GM10248 (cell line): ENCODE measurements at regions of chr11 and their contacts with region 1.

Region 1: GRCh38 chr11:65204646-65205601 is 23.2 kb downstream of the CAPN1 start:
- DNase-seq: peak; percentile 82
- CTCF ChIP-seq: peak; percentile 87

Region 2: DNA sequence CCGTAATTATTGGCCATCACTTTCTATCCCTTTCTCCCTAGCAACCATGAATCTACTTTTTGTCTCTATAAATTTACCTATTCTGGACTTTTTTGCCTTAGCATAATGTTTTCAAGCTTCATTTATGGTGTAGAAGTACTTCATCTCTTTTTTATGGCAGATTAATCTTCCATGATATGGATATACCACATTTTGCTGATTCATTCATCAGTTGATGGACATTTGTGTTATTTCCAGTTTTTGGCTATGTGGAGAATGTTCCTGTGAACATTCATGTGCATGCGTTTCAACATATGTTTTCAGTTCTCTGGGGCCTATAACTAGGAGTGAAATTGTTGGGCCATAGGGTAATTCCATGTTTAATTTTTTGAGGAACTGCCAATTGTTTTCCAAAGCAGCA is 10.4 kb before region 1 on chr11:
- CTCF ChIA-PET with region 1: interaction called, 10 read pairs
- POLR2A ChIA-PET with region 1: no interaction called
- DNase-seq: no peak
- CTCF ChIP-seq: no peak

Region 3: DNA sequence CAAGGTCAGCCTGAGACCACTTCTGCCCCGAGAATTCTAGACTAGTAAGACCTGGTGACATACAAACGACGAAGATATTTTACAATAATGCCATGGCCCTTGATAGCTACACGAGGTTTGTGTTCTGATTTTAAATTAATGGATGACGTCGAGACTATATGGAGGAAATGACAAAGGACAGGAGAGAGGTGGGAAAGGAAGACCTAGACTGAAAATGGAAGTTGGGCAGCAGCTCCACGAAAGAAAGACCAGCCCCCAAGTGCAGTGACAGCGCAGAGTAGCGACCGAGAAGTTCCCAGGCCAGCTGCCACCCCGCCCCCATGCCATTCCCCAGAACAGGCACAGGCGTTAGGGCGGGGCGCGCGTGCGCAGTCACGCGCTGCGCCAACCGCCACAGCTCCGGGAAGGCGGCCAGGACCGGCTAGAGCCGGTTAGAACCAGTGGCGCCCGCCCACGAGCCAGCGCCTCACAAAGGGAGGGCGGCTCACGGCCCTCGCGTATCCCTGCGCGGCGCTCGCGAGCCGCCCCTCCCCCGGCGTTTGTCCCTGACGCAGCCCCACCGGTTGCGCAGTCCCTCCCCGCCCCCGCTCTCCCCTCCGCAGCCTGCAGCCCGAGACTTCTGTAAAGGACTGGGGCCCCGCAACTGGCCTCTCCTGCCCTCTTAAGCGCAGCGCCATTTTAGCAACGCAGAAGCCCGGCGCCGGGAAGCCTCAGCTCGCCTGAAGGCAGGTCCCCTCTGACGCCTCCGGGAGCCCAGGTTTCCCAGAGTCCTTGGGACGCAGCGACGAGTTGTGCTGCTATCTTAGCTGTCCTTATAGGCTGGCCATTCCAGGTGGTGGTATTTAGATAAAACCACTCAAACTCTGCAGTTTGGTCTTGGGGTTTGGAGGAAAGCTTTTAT is 292.5 kb after region 1 on chr11:
- CTCF ChIA-PET with region 1: no interaction called
- POLR2A ChIA-PET with region 1: no interaction called
- DNase-seq: peak; percentile 87
- CTCF ChIP-seq: no peak

Region 4: DNA sequence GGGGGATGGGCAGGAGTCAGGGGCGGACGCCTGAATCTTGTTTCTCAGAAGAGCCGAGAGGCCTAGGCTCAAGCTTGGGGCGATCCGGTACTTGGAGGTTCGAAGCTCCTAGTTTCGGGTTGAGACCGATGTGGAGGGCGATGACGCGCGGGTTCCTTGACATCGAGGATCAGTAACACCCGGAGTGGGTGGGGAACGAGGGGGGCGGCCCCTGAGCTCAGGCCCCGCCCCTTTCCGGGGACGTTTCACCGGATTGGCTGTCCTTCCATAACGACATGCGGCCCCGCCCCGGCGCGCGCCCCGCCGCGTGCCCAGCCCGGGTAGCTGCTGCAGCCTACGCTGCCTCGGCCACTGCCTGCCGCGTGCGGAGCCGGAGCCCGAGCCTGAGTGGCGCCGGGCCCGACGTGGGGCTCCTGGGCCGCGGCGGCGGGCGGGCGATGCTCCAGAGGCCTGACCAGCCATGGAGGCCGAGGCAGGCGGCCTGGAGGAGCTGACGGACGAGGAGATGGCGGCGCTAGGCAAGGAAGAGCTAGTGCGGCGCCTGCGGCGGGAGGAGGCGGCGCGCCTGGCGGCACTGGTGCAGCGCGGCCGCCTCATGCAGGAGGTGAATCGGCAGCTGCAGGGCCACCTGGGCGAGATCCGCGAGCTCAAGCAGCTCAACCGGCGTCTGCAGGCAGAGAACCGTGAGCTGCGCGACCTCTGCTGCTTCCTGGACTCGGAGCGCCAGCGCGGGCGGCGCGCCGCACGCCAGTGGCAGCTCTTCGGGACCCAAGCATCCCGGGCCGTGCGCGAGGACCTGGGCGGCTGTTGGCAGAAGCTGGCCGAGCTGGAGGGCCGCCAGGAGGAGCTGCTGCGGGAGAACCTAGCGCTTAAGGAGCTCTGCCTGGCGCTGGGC is 685.6 kb after region 1 on chr11 and contains the start of gene CCDC85B:
- CTCF ChIA-PET with region 1: no interaction called
- POLR2A ChIA-PET with region 1: no interaction called
- DNase-seq: peak; percentile 95
- CTCF ChIP-seq: peak; percentile 13